Activated CD4-positive, alpha-beta memory T cell treated with anti-CD3 and anti-CD28 coated beads for 36 hours (primary cell): ENCODE measurements at regions of chrX and their contacts with region 1.

Region 1: DNA sequence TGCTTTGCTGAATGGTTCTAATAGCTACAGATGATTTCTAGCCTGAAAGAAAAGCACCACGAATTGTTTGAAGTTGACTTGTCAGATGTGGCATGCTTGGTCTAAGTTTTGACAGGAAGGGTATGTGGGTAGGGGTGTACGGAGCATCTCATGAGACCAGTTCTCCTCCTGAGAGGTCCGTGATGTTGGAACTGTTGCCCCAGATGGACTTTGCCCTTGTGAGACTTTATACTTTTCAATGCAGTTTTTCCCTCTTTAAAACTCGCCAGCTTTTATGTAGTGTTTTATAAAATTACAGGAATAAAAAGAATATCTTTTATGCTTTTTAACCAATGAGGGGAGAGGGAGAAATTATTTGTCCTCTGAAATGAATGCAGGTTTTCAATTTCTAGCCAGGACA is 16.6 kb upstream of the XG start:
- DNase-seq: no peak
- H3K4me3 Mint-ChIP-seq: no peak overlapping the region
- H3K27ac Mint-ChIP-seq: no peak overlapping the region
- H3K4me1 Mint-ChIP-seq: no peaks in the 10 kb centered on the region
- H3K27me3 Mint-ChIP-seq: no peaks in the 10 kb centered on the region

Region 2: GRCh38 chrX:2723286-2723879 is 11.9 kb before region 1 on chrX:
- CTCF ChIA-PET with region 1: no interaction called
- POLR2A ChIA-PET with region 1: no interaction called
- intact Hi-C with region 1: loop called (anchors 1 kb)
- DNase-seq: no peak
- H3K4me3 Mint-ChIP-seq: no peak overlapping the region
- H3K27ac Mint-ChIP-seq: peak overlapping the region; percentile 10
- H3K4me1 Mint-ChIP-seq: peaks cover 1% of the 10 kb centered on the region
- H3K27me3 Mint-ChIP-seq: no peaks in the 10 kb centered on the region

Region 3: DNA sequence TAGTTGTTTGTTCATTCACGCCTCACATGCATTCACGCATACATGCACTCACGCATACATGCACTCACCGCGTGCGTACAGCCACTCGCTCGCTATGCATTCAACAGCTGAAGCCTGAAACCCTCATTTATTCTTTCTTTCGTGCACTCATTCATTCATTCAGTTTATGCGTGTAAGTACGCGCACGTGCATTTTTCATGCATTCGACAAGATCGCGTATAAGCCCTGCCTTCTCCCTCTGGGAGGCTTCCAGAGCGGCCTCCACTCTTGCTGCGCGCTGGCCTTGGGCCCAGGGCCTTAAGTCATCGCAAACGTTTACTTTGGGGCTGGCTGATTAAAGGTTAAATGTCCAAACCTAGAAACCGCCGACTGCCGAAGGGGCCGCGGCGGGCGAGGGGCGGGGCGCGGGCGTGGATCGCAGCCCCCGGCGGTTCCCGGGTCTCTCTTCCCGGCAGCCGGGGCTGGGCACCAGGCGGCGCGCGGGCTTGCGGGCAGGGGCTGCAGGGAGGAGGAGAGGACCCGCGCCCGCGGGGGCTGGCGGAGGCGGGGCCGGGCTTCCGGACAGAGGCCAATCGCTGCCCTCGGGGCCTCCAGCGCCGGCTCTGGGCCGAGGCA is 93.2 kb after region 1 on chrX and contains the start of gene GYG2:
- CTCF ChIA-PET with region 1: no interaction called
- POLR2A ChIA-PET with region 1: no interaction called
- intact Hi-C with region 1: no loop called
- DNase-seq: no peak
- H3K4me3 Mint-ChIP-seq: no peak within 1 kb of the TSS
- H3K27ac Mint-ChIP-seq: no peak within 1 kb of the TSS
- H3K4me1 Mint-ChIP-seq: no peaks in the 10 kb centered on the region
- H3K27me3 Mint-ChIP-seq: peaks cover 11% of the 10 kb centered on the region
- total RNA-seq, gene GYG2: not detected